Activated T-helper 1 cell treated with anti-CD3 and anti-CD28 coated beads, Interleukin-12 subunit alpha, Interleukin-12 subunit beta, Interleukin-2, Interleukin-4 antibody, amounts not matched to agents 30 ng/mL and 10 ng/mL and 1 ng/mL, durations not matched to agents 14 hours and 24 hours and 36 hours (primary cell): ENCODE measurements at regions of chr9 and their contacts with region 1.

Region 1: GRCh38 chr9:20941174-20941690 is 90.2 kb downstream of the HACD4 start:
- DNase-seq: peak; percentile 28
- H3K4me3 Mint-ChIP-seq: no peak overlapping the region
- H3K27ac Mint-ChIP-seq: no peak overlapping the region
- H3K4me1 Mint-ChIP-seq: peaks cover 7% of the 10 kb centered on the region
- H3K27me3 Mint-ChIP-seq: no peaks in the 10 kb centered on the region

Region 2: DNA sequence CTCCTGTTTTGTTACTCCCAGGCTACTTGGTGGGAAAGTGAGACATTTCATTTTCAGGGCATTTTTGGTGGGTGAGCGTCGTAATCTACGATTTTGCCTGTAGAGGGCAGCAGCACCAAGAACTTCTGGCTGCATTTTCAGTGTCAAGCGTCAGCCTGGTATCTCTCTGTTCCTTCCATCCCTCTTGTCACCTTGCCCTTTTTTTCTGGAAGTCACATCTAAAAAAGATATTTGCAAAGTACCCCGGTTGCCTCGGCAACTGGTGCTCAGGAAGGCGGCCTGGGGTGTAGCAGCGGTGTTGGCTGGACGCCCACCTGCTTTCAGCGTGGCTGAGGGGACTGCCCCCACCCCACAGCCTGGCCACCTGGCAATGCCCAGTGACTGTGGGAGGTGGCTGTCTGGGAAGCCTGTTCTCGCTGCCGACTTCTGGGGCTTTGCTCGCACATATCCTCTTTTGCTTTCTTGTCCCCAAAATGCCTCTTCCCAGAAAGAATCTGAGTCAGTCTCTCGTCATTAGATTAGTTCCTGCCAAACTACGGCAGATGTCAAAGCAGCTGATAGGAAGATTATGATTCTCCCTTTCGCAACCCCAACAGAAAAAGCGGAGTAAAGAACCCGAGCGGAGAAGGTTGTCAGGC is 1447.9 kb before region 1 on chr9:
- intact Hi-C with region 1: loop called (anchors 10 kb)
- DNase-seq: peak; percentile 25
- H3K4me3 Mint-ChIP-seq: peak overlapping the region; percentile 9
- H3K27ac Mint-ChIP-seq: no peak overlapping the region
- H3K4me1 Mint-ChIP-seq: peaks cover 17% of the 10 kb centered on the region
- H3K27me3 Mint-ChIP-seq: peaks cover 12% of the 10 kb centered on the region

Region 3: GRCh38 chr9:19925817-19926503 is 1015.3 kb before region 1 on chr9:
- intact Hi-C with region 1: loop called (anchors 1 kb)
- DNase-seq: peak; percentile 79
- H3K4me3 Mint-ChIP-seq: peak overlapping the region; percentile 65
- H3K27ac Mint-ChIP-seq: peak overlapping the region; percentile 2
- H3K4me1 Mint-ChIP-seq: peaks cover 28% of the 10 kb centered on the region
- H3K27me3 Mint-ChIP-seq: peaks cover 2% of the 10 kb centered on the region

Region 4: GRCh38 chr9:20426019-20426418 is 515.2 kb before region 1 on chr9:
- intact Hi-C with region 1: loop called (anchors 5 kb)
- DNase-seq: no peak
- H3K4me3 Mint-ChIP-seq: no peak overlapping the region
- H3K27ac Mint-ChIP-seq: no peak overlapping the region
- H3K4me1 Mint-ChIP-seq: no peaks in the 10 kb centered on the region
- H3K27me3 Mint-ChIP-seq: no peaks in the 10 kb centered on the region

Region 5: GRCh38 chr9:20437476-20437875 is 503.8 kb before region 1 on chr9:
- intact Hi-C with region 1: loop called (anchors 5 kb)
- DNase-seq: no peak
- H3K4me3 Mint-ChIP-seq: no peak overlapping the region
- H3K27ac Mint-ChIP-seq: no peak overlapping the region
- H3K4me1 Mint-ChIP-seq: peaks cover 30% of the 10 kb centered on the region
- H3K27me3 Mint-ChIP-seq: no peaks in the 10 kb centered on the region

Region 6: GRCh38 chr9:20884985-20885593 is 56.1 kb before region 1 on chr9:
- intact Hi-C with region 1: loop called (anchors 1 kb)
- DNase-seq: peak; percentile 12
- H3K4me3 Mint-ChIP-seq: no peak overlapping the region
- H3K27ac Mint-ChIP-seq: no peak overlapping the region
- H3K4me1 Mint-ChIP-seq: no peaks in the 10 kb centered on the region
- H3K27me3 Mint-ChIP-seq: no peaks in the 10 kb centered on the region

Region 7: GRCh38 chr9:21110708-21111576 is 169.7 kb after region 1 on chr9:
- intact Hi-C with region 1: loop called (anchors 1 kb)
- DNase-seq: no peak
- H3K4me3 Mint-ChIP-seq: no peak overlapping the region
- H3K27ac Mint-ChIP-seq: no peak overlapping the region
- H3K4me1 Mint-ChIP-seq: no peaks in the 10 kb centered on the region
- H3K27me3 Mint-ChIP-seq: peaks cover 9% of the 10 kb centered on the region